Heart right ventricle (tissue), 16 donors: ENCODE measurements at regions of chr6 and their contacts with region 1.

Region 1: GRCh38 chr6:150395398-150396009 is 26.7 kb downstream of the IYD start:
- DNase-seq: peak in 1 of 2 donors; percentile 47
- ATAC-seq: peak; percentile 61 to 85 (median 73)
- H3K4me3 ChIP-seq: no peak overlapping the region
- H3K27ac ChIP-seq: no peak overlapping the region
- H3K4me1 ChIP-seq: no peaks in the 10 kb centered on the region
- H3K27me3 ChIP-seq: peaks cover 0 to 14% (median 0%) of the 10 kb centered on the region in 7 donors
- CTCF ChIP-seq: peak; percentile 55 to 78 (median 75)

Region 2: GRCh38 chr6:150079604-150080003 is 315.9 kb before region 1 on chr6:
- intact Hi-C with region 1: loop called (anchors 2 to 5 kb)
- DNase-seq: no peak
- ATAC-seq: no peak
- H3K4me3 ChIP-seq: no peak overlapping the region
- H3K27ac ChIP-seq: no peak overlapping the region
- H3K4me1 ChIP-seq: no peaks in the 10 kb centered on the region
- H3K27me3 ChIP-seq: peaks cover 0 to 35% (median 0%) of the 10 kb centered on the region in 7 donors
- CTCF ChIP-seq: no peak

Region 3: DNA sequence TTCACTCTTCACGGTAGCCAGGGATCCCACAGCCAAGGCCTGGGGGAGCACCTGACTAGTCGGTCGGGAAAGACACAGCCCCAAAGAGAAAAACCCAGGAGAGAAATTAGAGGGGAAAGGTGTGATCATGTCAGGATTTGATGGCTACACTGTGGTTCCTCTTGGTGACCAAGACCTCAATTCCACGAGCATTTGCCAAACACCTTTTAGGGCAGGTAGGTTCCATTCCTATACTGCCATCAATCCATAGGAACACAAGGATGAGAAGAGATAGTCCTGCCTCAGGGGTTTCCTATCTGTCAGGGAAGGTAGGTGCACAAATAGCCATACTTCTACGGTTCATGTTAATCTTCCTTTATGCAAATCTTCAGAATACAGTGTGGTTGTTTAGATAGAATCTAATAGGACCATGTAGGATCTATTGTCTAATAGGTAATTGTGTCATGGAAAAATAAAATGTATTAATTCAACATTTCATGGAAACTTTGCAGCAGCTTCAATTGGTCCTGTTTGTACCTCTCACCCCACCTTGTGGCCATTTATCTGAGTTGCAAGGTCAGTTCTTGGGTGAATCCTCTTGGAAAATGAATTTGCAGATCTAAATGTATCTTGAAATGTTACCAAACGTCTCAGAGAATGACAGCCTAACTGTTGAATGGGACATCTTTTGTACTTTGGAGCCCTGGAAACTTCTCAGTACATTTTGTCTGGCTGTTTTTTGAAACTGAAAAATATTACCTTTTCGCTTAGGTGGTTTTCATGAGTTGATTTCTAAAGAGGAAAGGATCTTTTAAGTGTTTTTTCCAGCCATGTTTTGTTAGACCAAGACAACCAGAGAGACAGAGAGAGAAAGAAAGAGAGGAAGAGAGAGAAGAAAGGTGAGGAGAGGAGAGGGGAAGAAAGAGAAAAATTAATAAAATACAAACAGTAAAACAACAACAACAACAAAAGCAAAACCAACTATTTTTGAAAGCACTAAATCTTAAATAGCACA is 60.4 kb before region 1 on chr6:
- intact Hi-C with region 1: loop called in 2 of 10 experiments (anchors 10 kb)
- DNase-seq: peak in 1 of 2 donors; percentile 51
- ATAC-seq: peak in 3 of 8 donors; percentile 33 to 59 (median 37)
- H3K4me3 ChIP-seq: no peak overlapping the region
- H3K27ac ChIP-seq: no peak overlapping the region
- H3K4me1 ChIP-seq: no peaks in the 10 kb centered on the region
- H3K27me3 ChIP-seq: peaks cover 0 to 4% (median 0%) of the 10 kb centered on the region in 7 donors
- CTCF ChIP-seq: peak; percentile 57 to 91 (median 86)

Region 4: GRCh38 chr6:150343434-150343833 is 52.1 kb before region 1 on chr6:
- intact Hi-C with region 1: loop called in 2 of 10 experiments (anchors 10 kb)
- DNase-seq: no peak
- ATAC-seq: no peak
- H3K4me3 ChIP-seq: no peak overlapping the region
- H3K27ac ChIP-seq: no peak overlapping the region
- H3K4me1 ChIP-seq: no peaks in the 10 kb centered on the region
- H3K27me3 ChIP-seq: peaks cover 0 to 4% (median 0%) of the 10 kb centered on the region in 7 donors
- CTCF ChIP-seq: no peak